Motor neuron (in vitro differentiated cells): ENCODE measurements at regions of chr12 and their contacts with region 1.

Region 1: DNA sequence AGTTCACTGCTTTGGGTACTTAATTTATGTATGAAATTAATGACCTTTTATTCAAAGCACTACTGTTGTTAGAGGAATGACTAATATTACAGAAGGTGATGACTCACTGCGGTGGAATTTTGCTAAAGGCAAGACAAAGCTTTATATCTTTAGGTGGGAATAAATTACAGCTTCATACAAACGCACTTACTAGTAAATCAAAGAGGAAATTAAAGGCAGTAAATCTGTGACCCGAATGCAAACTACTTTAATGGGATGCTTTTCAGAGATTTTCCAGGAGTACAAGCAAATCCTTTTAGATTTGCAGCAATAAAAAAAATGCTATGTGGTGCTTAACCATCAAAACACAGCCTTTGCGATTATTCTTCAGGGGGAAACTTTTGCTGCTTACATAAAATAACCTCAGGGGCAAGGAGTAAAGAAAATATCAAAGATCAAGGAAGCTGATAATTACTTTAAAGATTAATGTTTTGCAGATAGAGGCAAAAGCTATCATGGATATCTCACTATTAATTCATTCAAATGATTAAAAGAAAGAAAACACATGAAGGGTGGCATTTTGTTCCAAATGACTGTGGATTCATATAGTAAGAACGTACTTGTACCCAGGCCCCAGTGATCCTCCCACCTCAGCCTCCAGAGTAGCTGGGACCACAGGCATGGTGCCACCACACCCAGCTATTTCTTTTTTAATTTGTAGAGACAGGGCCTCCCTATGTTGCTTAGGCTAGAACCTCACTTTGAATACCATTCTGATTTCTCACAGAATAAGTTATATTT is 98.9 kb downstream of the DENND5B start:
- ATAC-seq: peak; percentile 71 to 92 (median 86)
- H3K4me3 ChIP-seq: no peak overlapping the region
- H3K27ac ChIP-seq: peak overlapping the region in 1 of 2 donors; percentile 32
- H3K4me1 ChIP-seq: peaks cover 10 to 19% of the 10 kb centered on the region in 2 donors

Region 2: GRCh38 chr12:31406345-31406744 is 85.7 kb before region 1 on chr12:
- in situ Hi-C with region 1: no loop called
- ATAC-seq: no peak
- H3K4me3 ChIP-seq: no peak overlapping the region
- H3K27ac ChIP-seq: no peak overlapping the region
- H3K4me1 ChIP-seq: peaks cover 0 to 4% of the 10 kb centered on the region in 2 donors

Region 3: GRCh38 chr12:31589904-31590641 is 98.1 kb after region 1 on chr12:
- in situ Hi-C with region 1: loop called in 1 of 9 experiments (anchors 25 kb)
- ATAC-seq: peak; percentile 54 to 68 (median 60)
- H3K4me3 ChIP-seq: peak overlapping the region; percentile 69 to 88 (median 79)
- H3K27ac ChIP-seq: peak overlapping the region; percentile 94 to 95
- H3K4me1 ChIP-seq: peaks cover 4 to 7% of the 10 kb centered on the region in 2 donors

Region 4: GRCh38 chr12:31797230-31797872 is 305.3 kb after region 1 on chr12:
- in situ Hi-C with region 1: no loop called
- ATAC-seq: no peak
- H3K4me3 ChIP-seq: no peak overlapping the region
- H3K27ac ChIP-seq: no peak overlapping the region
- H3K4me1 ChIP-seq: peaks cover 4 to 11% of the 10 kb centered on the region in 2 donors